Transverse colon (tissue), 4 donors: ENCODE measurements at regions of chr4 and their contacts with region 1.

Region 1: GRCh38 chr4:110586131-110586850 is 36.6 kb downstream of the PITX2 start:
- DNase-seq: no peak
- H3K4me3 ChIP-seq: no peak overlapping the region
- H3K27ac ChIP-seq: no peak overlapping the region
- H3K4me1 ChIP-seq: no peaks in the 10 kb centered on the region
- H3K27me3 ChIP-seq: no peaks in the 10 kb centered on the region
- CTCF ChIP-seq: peak in 3 of 5 experiments; percentile 14 to 30 (median 27)
- EP300 ChIP-seq: no peak
- POLR2A ChIP-seq: no peak

Region 2: GRCh38 chr4:110245577-110245976 is 340.7 kb before region 1 on chr4:
- in situ Hi-C with region 1: no loop called
- intact Hi-C with region 1: no loop called
- DNase-seq: no peak
- H3K4me3 ChIP-seq: no peak overlapping the region
- H3K27ac ChIP-seq: no peak overlapping the region
- H3K4me1 ChIP-seq: no peaks in the 10 kb centered on the region
- H3K27me3 ChIP-seq: peaks cover 3% of the 10 kb centered on the region
- CTCF ChIP-seq: no peak
- EP300 ChIP-seq: no peak
- POLR2A ChIP-seq: no peak

Region 3: DNA sequence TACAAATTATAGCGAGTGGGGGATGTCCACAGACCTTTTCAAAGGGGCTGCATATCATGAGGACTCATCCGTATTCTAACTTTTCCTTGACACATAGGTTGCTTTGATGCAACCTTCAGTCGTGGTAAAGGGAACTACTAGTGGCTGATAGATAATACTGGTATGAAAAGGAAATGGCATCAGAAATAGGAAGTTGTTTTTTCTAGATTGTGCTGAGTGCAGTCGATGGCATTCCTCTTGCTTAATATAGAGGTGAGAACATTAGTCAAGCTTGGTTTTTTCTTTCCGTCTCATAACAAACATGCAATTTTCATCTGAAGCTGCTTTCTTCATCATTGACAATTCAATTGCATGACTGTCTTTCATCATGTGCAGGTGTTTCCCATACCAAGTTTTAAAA is 93.8 kb before region 1 on chr4:
- in situ Hi-C with region 1: no loop called
- intact Hi-C with region 1: no loop called
- DNase-seq: no peak
- H3K4me3 ChIP-seq: no peak overlapping the region
- H3K27ac ChIP-seq: no peak overlapping the region
- H3K4me1 ChIP-seq: peaks cover 0 to 9% (median 4%) of the 10 kb centered on the region in 4 donors
- H3K27me3 ChIP-seq: peaks cover 6% of the 10 kb centered on the region
- CTCF ChIP-seq: no peak
- EP300 ChIP-seq: no peak
- POLR2A ChIP-seq: no peak

Region 4: DNA sequence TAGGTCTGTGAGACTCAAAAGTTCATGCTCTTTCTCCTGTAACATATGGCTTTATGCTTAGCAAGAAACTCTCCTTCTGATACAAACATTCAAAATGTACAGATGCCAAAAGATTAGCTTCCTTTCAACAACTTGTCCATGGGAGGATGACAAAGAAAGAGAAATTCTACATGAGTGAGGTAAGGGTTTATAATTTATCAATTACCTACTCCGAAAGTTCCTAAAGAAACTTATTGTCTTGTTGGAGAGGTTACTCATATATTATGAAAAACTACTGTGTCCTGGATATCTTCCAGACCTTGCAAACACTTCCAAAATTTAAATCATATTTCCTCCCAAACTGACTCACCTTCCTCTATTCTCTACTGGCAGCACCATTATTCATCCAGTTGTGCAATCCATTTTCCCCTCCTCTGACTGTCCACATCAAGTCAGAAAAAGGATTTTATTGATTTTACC is 45.3 kb before region 1 on chr4:
- in situ Hi-C with region 1: no loop called
- intact Hi-C with region 1: loop called (anchors 2 kb)
- DNase-seq: no peak
- H3K4me3 ChIP-seq: no peak overlapping the region
- H3K27ac ChIP-seq: no peak overlapping the region
- H3K4me1 ChIP-seq: no peaks in the 10 kb centered on the region
- H3K27me3 ChIP-seq: no peaks in the 10 kb centered on the region
- CTCF ChIP-seq: no peak
- EP300 ChIP-seq: no peak
- POLR2A ChIP-seq: no peak

Region 5: DNA sequence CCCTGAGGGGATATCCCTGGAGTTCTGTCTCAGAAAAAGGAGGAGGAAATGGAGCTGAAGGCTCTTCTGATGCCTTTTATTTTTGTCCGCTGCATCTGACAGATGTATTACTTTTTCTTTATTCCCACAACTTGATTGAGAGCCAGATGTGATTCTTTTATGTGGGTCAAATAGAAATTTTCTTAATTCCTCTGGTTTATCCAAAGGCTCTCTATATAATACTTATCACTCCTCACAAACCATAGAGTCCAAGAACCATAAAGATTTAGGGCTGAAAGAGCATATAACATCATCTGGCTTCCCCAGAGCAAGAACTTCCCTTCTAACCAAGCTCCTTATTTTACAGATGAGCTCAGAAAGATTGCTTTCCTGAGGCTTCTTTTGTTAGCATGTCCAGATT is 802.3 kb after region 1 on chr4:
- in situ Hi-C with region 1: no loop called
- intact Hi-C with region 1: no loop called
- DNase-seq: no peak
- H3K4me3 ChIP-seq: no peak overlapping the region
- H3K27ac ChIP-seq: no peak overlapping the region
- H3K4me1 ChIP-seq: no peaks in the 10 kb centered on the region
- H3K27me3 ChIP-seq: no peaks in the 10 kb centered on the region
- CTCF ChIP-seq: no peak
- EP300 ChIP-seq: no peak
- POLR2A ChIP-seq: no peak